ENCODE measurements at regions of chr3 and their contacts with region 1.

Region 1: DNA sequence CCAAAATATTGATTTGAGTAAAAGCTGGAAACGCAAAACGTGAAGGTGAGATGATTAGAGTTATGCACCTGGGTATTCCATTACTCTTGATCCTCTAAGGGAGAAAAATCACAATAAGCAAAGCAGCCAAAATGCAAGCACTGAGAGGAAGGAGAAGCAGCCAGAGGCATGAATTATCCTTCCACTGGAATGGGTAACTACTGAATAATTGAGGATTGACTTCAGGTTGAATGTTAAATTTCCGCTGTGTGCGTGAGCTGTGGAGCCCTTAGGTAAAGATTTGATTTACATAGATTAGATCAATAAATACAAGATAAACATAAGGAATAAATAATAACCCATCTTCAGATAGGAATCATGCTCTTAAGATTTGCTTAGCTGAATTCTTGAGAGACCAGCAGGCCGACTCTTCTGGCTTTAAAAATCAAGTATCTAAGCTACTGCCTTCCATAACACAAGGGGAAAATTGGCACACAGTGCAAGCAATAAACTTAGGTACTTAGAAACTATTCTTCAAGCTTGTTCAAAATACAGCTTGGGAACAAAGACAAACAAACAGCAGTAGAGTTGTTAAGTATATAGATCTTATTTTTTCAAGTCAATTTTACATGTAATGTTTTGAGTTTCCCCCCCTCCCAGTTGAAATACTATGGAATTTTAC is 1459.5 kb downstream of the ZPLD1 start:
- DNase-seq: no peak
- ATAC-seq: no peak
- H3K4me3 ChIP-seq: no peak overlapping the region
- H3K27ac ChIP-seq: no peak overlapping the region
- H3K4me1 ChIP-seq: no peaks in the 10 kb centered on the region
- H3K27me3 ChIP-seq: no peaks in the 10 kb centered on the region
- CTCF ChIP-seq: no peak

Region 2: DNA sequence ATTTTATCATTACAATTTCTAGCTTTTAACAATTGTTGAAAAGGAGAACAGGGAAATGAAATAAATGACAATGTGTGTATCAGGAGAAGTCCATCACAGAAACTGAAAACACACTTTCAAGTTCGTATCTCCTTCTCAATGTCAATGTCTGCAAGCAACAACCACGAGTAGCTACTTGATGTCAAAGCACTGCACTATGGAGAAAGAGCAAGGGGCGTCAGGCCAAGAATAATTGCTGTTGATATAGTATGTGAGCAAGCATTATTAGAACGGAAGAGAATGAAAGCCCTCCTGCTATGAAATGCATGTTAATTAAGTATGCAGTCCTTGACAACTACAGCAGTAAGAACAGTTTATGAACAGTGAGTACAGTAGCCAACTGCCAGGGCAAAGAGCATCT is 209.4 kb before region 1 on chr3:
- CTCF ChIA-PET with region 1: interaction called, 12 read pairs
- POLR2A ChIA-PET with region 1: no interaction called
- in situ Hi-C with region 1: no loop called
- intact Hi-C with region 1: no loop called
- DNase-seq: no peak
- ATAC-seq: no peak
- H3K4me3 ChIP-seq: no peak overlapping the region
- H3K27ac ChIP-seq: no peak overlapping the region
- H3K4me1 ChIP-seq: no peaks in the 10 kb centered on the region
- H3K27me3 ChIP-seq: no peaks in the 10 kb centered on the region
- CTCF ChIP-seq: no peak